ENCODE measurements at regions of chr12 and their contacts with region 1.

Region 1: DNA sequence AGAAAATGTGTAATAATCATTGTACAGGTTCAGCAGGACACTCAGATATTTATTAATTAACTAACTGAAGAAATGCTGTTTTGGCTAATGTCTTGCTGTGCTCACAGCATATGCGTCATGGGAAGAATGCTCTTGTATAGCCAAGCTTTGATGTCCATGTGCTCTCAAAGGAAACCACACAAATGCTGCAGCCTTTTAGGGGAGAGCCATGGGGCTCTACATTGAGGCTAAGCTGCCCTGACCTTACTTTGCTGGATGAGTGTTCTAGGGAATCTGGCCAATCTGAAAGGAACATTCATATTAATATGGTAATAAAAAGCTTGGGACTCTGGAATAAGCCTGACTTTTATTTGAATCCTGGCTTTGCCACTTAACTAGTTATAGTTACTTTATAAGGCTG is 9.5 kb upstream of the CRADD start:
- DNase-seq: no peak
- ATAC-seq: no peak
- H3K4me3 ChIP-seq: no peak overlapping the region
- H3K27ac ChIP-seq: no peak overlapping the region
- H3K4me1 ChIP-seq: no peaks in the 10 kb centered on the region
- H3K27me3 ChIP-seq: no peaks in the 10 kb centered on the region
- CTCF ChIP-seq: no peak
- EP300 ChIP-seq: no peak
- POLR2A ChIP-seq: no peak
- RAD21 ChIP-seq: no peak

Region 2: DNA sequence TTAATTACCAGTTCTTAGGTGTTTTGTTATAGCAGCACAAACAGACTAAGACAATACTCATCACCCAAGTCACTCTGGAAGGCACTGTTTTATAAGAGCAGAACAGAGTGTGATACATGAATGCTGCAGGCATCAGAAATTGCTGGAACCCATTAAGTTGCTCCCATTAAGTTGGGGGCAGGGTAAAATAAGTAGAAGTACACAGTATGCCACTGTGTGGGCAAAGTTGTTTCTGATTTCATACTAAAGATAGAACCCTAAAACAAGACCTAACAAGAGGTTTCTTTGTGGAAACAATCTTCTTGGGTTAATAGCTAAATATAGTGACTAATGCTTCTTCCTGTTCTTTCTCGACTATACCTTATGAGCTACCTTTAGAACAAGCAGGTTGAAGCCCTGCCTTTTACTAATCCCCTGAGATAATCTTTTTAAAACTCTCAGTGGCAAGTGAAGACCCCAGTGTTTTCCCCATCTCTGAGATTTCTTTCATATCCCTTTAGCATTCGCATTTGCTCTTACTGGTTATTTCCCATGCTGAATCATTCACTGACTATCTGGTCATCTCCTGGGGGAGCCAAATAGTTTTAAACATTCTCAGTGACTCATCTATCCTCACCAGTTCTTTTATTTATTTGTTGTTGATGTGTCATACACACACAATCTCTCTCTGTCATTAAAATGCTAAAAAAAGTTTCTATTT is 42.9 kb before region 1 on chr12:
- CTCF ChIA-PET with region 1: no interaction called
- POLR2A ChIA-PET with region 1: no interaction called
- RAD21 ChIA-PET with region 1: no interaction called
- SMC1A ChIA-PET with region 1: no interaction called
- in situ Hi-C with region 1: no loop called
- intact Hi-C with region 1: loop called (anchors 1 kb)
- DNase-seq: peak; percentile 63
- ATAC-seq: peak; percentile 90
- H3K4me3 ChIP-seq: no peak overlapping the region
- H3K27ac ChIP-seq: 0 out of 2 replicates have a peak overlapping the region, but pooled peaks have one; percentile 35
- H3K4me1 ChIP-seq: no peaks in the 10 kb centered on the region
- H3K27me3 ChIP-seq: no peaks in the 10 kb centered on the region
- CTCF ChIP-seq: no peak
- EP300 ChIP-seq: peak in 1 of 2 experiments; percentile 75; a peak in 2 of 4 replicates
- POLR2A ChIP-seq: no peak
- RAD21 ChIP-seq: no peak

Region 3: GRCh38 chr12:93682846-93683261 is 15.2 kb after region 1 on chr12:
- CTCF ChIA-PET with region 1: no interaction called
- POLR2A ChIA-PET with region 1: no interaction called
- RAD21 ChIA-PET with region 1: no interaction called
- SMC1A ChIA-PET with region 1: no interaction called
- in situ Hi-C with region 1: no loop called
- intact Hi-C with region 1: no loop called
- DNase-seq: no peak
- ATAC-seq: no peak
- H3K4me3 ChIP-seq: no peak overlapping the region
- H3K27ac ChIP-seq: no peak overlapping the region
- H3K4me1 ChIP-seq: peaks cover 6% of the 10 kb centered on the region
- H3K27me3 ChIP-seq: no peaks in the 10 kb centered on the region
- CTCF ChIP-seq: no peak
- EP300 ChIP-seq: no peak
- POLR2A ChIP-seq: no peak
- RAD21 ChIP-seq: no peak

Region 4: DNA sequence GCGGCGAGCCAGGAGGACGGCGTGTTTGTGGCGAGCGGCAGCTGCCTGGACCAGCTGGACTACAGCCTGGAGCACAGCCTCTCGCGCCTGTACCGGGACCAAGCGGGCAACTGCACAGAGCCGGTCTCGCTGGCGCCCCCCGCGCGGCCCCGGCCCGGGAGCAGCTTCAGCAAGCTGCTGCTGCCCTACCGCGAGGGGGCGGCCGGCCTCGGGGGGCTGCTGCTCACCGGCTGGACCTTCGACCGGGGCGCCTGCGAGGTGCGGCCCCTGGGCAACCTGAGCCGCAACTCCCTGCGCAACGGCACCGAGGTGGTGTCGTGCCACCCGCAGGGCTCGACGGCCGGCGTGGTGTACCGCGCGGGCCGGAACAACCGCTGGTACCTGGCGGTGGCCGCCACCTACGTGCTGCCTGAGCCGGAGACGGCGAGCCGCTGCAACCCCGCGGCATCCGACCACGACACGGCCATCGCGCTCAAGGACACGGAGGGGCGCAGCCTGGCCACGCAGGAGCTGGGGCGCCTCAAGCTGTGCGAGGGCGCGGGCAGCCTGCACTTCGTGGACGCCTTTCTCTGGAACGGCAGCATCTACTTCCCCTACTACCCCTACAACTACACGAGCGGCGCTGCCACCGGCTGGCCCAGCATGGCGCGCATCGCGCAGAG is 481.6 kb after region 1 on chr12:
- CTCF ChIA-PET with region 1: no interaction called
- POLR2A ChIA-PET with region 1: no interaction called
- RAD21 ChIA-PET with region 1: no interaction called
- SMC1A ChIA-PET with region 1: no interaction called
- in situ Hi-C with region 1: no loop called
- intact Hi-C with region 1: no loop called
- DNase-seq: no peak
- ATAC-seq: peak; percentile 50
- H3K4me3 ChIP-seq: peak overlapping the region; percentile 91
- H3K27ac ChIP-seq: peak overlapping the region; percentile 70
- H3K4me1 ChIP-seq: peaks cover 13% of the 10 kb centered on the region
- H3K27me3 ChIP-seq: no peaks in the 10 kb centered on the region
- CTCF ChIP-seq: peak; percentile 49 to 86 (median 70); a peak in 5 of 6 replicates
- EP300 ChIP-seq: no peak
- POLR2A ChIP-seq: peak; percentile 66
- RAD21 ChIP-seq: peak; percentile 60

Measured in GM12878 (cell line).